CD14-positive monocyte (primary cell): ENCODE measurements at regions of chr17 and their contacts with region 1.

Region 1: DNA sequence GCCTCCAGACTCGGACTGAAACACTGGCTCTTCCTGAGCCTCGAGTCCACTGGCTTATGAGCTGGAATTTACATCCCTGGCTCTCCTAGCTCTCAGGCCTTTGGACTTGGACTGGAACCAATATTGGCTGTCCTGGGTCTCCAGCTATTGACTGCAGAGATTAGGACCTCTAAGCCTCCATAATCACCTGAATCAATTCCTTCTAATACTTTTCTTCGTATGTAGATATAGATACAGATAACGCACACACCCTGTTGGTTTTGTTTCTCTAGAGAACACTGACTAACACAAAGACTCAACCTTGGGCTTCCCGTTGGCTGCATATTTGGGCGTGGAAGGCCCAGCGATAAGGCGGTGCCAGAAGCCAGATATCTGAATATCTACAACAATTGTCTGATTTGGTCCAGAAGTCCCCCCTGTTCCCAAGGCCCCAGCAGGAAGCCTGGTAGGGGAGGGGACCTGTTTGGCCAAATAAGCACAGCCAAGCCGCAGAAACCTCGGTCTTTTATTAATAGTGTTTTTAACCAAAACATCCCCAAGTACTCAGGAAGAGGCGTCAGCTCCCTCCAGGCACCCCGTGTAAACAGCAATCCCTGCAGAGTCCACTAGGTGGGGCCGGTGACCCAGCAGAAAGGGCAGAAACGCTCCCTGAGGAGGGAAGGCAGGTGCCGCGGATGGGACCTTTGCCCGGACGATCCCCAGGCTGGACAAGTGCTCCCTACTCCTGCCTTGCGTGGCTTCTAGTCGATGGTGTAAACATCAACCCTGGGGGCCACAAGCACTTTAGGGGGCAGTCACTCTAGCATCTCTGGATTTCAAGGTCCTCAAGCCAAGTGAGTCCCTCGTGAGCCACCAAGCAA is 57.0 kb downstream of the ABR start:
- DNase-seq: peak; percentile 57 to 71 (median 65)
- H3K4me3 ChIP-seq: no peak overlapping the region
- H3K4me3 Mint-ChIP-seq: no peak overlapping the region
- H3K27ac ChIP-seq: peak overlapping the region in 1 of 2 donors; percentile 6
- H3K27ac Mint-ChIP-seq: peak overlapping the region in 2 of 7 donors; percentile 65
- H3K4me1 ChIP-seq: peaks cover 5 to 10% of the 10 kb centered on the region in 2 donors
- H3K4me1 Mint-ChIP-seq: peaks cover 9% of the 10 kb centered on the region
- H3K27me3 ChIP-seq: no peaks in the 10 kb centered on the region
- H3K27me3 Mint-ChIP-seq: peaks cover 0 to 3% (median 3%) of the 10 kb centered on the region in 3 donors
- CTCF ChIP-seq: peak; percentile 91

Region 2: GRCh38 chr17:1022278-1023024 is 100.3 kb before region 1 on chr17:
- intact Hi-C with region 1: no loop called
- DNase-seq: no peak
- H3K4me3 ChIP-seq: no peak overlapping the region
- H3K4me3 Mint-ChIP-seq: no peak overlapping the region
- H3K27ac ChIP-seq: no peak overlapping the region
- H3K27ac Mint-ChIP-seq: peak overlapping the region in 1 of 7 donors; percentile 50
- H3K4me1 ChIP-seq: no peaks in the 10 kb centered on the region
- H3K4me1 Mint-ChIP-seq: no peaks in the 10 kb centered on the region
- H3K27me3 ChIP-seq: no peaks in the 10 kb centered on the region
- H3K27me3 Mint-ChIP-seq: peaks cover 0 to 3% (median 0%) of the 10 kb centered on the region in 3 donors
- CTCF ChIP-seq: no peak

Region 3: GRCh38 chr17:1153795-1154546 is 31.2 kb after region 1 on chr17:
- intact Hi-C with region 1: no loop called
- DNase-seq: peak in 2 of 3 donors; percentile 12 to 46
- H3K4me3 ChIP-seq: no peak overlapping the region
- H3K4me3 Mint-ChIP-seq: no peak overlapping the region
- H3K27ac ChIP-seq: no peak overlapping the region
- H3K27ac Mint-ChIP-seq: no peak overlapping the region
- H3K4me1 ChIP-seq: peaks cover 11 to 17% of the 10 kb centered on the region in 2 donors
- H3K4me1 Mint-ChIP-seq: peaks cover 14% of the 10 kb centered on the region
- H3K27me3 ChIP-seq: no peaks in the 10 kb centered on the region
- H3K27me3 Mint-ChIP-seq: no peaks in the 10 kb centered on the region
- CTCF ChIP-seq: no peak

Region 4: DNA sequence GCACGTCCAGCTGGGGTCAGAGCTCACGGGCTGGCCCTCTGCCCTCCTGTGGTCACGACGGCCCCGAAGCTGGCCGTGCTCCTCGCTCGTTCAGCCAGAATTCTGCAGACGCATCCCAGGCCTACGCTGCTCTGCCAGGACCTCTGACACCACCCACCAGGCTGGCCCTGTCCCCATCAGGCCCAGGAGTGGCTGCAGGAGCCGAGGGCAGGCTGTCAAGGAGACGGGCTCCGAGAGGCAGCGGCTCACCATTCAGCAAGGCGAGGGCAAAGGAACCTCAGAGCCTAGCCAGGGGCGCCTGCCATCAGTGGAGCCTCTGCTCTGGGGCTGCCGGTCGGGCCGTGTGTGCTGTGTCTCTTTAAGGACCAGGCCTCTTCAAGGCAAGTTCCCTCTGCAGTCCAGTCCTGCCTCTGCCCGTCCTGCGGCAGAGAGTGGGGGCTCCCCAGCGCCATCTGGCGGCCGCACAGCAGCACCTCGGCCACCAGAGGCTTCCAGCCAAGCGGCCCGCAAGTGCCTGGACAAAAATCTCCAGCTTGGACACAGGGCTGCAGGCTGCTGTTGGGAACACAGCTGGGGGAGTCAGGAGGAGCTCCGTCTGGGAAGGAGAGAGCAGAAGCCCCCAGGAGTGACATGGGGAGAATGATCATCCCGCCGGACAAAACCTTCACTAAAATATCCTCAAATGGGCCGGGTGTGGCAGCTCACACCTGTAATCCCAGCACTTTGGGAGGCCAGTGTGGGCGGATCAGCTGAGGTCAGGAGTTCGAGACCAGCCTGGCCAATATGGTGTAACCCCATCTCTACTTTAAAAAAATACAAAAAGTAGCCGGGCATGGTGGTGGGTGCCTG is 64.4 kb after region 1 on chr17:
- intact Hi-C with region 1: loop called (anchors 5 kb)
- DNase-seq: peak; percentile 82 to 84 (median 83)
- H3K4me3 ChIP-seq: no peak overlapping the region
- H3K4me3 Mint-ChIP-seq: peak overlapping the region; percentile 37 to 78
- H3K27ac ChIP-seq: no peak overlapping the region
- H3K27ac Mint-ChIP-seq: peak overlapping the region in 6 of 7 donors; percentile 28 to 87 (median 68)
- H3K4me1 ChIP-seq: peaks cover 49 to 63% of the 10 kb centered on the region in 2 donors
- H3K4me1 Mint-ChIP-seq: peaks cover 67% of the 10 kb centered on the region
- H3K27me3 ChIP-seq: no peaks in the 10 kb centered on the region
- H3K27me3 Mint-ChIP-seq: peaks cover 0 to 9% (median 0%) of the 10 kb centered on the region in 3 donors
- CTCF ChIP-seq: peak; percentile 97

Region 5: DNA sequence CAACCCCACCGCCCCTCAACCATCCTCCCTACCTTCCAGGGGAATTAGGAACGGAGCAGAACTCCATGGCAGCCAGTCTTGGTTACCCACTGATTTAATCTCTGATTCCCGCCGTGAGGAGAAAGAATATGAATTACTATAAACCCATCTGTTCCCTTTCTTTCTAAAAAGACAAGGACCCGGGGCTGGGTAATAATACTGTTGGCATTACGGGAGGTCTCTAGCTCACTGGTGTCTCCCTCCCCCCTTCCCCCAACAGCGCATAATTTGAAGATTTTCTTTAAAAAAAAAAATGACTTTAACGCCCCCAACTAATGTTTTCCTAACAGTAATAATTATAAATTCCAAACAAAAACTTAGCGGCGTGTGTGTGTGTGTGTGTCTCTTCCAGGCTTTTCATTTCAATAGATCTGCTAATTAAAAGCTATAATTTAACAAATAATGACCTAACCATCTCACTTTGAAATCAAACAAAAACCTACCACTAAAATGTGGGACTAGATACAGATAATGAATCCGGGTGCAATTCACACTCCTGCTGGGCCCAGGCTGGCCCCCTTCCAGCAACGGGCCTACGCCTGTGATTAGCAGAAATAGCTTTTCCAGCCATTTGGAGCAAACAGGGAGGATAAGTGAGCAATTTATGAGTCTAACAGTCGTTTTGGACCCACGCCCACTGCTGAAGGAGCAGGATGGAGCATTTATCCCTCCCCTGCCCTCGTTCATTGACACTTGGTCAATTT is 129.3 kb after region 1 on chr17:
- intact Hi-C with region 1: loop called in 1 of 2 experiments (anchors 10 kb)
- DNase-seq: no peak
- H3K4me3 ChIP-seq: no peak overlapping the region
- H3K4me3 Mint-ChIP-seq: no peak overlapping the region
- H3K27ac ChIP-seq: no peak overlapping the region
- H3K27ac Mint-ChIP-seq: no peak overlapping the region
- H3K4me1 ChIP-seq: peaks cover 7 to 10% of the 10 kb centered on the region in 2 donors
- H3K4me1 Mint-ChIP-seq: peaks cover 8% of the 10 kb centered on the region
- H3K27me3 ChIP-seq: peaks cover 3 to 18% of the 10 kb centered on the region in 2 donors
- H3K27me3 Mint-ChIP-seq: peaks cover 28 to 35% (median 29%) of the 10 kb centered on the region in 3 donors
- CTCF ChIP-seq: no peak